AG04450 (cell line): ENCODE measurements at regions of chr17 and their contacts with region 1.

Region 1: GRCh38 chr17:20992987-20993862 is 49.6 kb downstream of the USP22 start:
- DNase-seq: peak; percentile 48
- H3K4me3 ChIP-seq: no peak overlapping the region
- H3K27ac ChIP-seq: no peak overlapping the region
- H3K27me3 ChIP-seq: peaks cover 4% of the 10 kb centered on the region
- CTCF ChIP-seq: peak; percentile 98

Region 2: DNA sequence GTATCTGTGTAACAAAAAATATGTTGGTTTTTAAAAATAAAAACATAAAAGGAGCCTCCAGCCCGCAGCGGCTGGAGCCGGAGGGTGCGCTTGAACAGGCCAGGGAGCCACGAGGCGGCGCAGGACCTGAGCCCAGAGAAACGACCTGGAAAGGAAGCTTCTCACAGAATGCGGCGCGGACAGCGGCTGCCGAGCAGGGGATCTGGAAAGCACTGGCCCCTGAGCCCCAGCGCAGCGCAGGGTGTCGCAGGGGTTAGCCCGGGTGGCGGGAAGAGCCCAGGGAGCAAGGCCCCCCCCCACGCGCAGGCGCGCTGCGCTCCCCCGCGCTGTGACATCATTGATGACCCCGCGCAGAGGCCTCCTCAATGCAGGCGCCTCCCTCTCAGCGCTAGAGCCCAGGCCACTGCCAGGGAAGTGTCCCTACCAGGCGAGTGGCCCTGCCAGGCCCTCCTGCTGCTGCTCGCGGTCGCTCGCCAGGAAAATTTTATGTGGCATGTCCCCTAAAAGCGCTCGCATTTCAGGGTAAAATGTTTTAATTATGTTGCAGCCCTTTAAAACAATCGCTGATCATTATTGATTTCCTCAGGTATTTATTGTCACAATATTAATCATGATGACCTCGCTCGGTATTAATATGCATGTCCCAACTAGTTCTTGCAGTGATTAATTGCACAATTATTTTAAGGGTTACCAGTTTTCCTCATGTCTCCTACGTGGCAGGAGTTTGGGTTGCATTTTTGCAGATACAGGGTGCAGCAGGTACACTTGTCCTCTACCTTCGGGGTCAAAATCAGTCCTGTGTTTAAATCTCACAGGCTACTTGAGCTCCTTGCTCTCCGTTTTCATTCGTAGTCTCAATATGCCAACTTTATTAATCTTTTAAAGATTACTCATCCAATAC is 84.6 kb before region 1 on chr17:
- CTCF ChIA-PET with region 1: interaction called, 24 read pairs
- POLR2A ChIA-PET with region 1: no interaction called
- DNase-seq: no peak
- H3K4me3 ChIP-seq: peak overlapping the region; percentile 68
- H3K27ac ChIP-seq: peak overlapping the region; percentile 52
- H3K27me3 ChIP-seq: no peaks in the 10 kb centered on the region
- CTCF ChIP-seq: peak; percentile 81

Region 3: DNA sequence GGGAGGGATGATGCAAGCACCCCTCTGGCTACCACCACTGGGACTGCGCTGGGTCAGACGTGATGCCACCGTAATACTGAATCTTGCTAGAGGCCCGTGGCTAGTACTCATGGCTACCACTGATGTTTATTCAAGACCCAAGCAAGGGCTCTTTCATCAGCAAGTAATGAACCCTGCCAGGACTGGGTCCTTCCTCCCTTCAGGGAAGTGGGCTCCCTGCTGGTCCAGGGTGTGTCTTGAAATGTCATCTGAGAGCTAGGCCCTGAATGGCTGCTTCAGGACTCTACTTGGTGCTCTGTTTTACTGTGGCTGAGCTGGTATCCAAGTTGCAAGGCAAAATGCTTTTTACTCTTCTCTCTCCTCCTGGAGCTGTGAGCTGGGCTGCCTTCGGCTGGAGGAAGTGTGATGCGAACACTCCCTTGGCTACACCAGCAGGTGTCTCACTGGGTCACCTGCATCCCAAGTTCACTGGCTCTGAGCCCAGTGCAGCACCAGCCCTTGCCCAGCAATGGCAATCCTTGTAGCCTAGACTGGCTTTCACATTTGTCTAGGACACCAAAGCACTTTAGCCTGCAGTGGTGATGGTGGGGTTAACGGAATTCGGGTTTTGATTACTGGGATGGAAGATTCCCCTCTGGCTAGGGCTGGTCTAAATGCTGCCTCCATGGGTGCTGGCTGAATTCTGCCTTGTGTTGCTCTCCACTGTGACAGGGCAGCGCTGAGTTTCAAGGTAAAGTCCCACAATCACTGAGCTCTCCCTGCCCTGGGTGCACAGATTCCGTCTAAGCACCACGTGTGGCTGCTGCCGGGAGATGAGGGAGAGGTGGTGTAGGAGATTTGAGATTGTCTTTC is 49.0 kb before region 1 on chr17:
- CTCF ChIA-PET with region 1: interaction called, 11 read pairs
- POLR2A ChIA-PET with region 1: no interaction called
- DNase-seq: no peak
- H3K4me3 ChIP-seq: no peak overlapping the region
- H3K27ac ChIP-seq: no peak overlapping the region
- H3K27me3 ChIP-seq: peaks cover 28% of the 10 kb centered on the region
- CTCF ChIP-seq: no peak

Region 4: DNA sequence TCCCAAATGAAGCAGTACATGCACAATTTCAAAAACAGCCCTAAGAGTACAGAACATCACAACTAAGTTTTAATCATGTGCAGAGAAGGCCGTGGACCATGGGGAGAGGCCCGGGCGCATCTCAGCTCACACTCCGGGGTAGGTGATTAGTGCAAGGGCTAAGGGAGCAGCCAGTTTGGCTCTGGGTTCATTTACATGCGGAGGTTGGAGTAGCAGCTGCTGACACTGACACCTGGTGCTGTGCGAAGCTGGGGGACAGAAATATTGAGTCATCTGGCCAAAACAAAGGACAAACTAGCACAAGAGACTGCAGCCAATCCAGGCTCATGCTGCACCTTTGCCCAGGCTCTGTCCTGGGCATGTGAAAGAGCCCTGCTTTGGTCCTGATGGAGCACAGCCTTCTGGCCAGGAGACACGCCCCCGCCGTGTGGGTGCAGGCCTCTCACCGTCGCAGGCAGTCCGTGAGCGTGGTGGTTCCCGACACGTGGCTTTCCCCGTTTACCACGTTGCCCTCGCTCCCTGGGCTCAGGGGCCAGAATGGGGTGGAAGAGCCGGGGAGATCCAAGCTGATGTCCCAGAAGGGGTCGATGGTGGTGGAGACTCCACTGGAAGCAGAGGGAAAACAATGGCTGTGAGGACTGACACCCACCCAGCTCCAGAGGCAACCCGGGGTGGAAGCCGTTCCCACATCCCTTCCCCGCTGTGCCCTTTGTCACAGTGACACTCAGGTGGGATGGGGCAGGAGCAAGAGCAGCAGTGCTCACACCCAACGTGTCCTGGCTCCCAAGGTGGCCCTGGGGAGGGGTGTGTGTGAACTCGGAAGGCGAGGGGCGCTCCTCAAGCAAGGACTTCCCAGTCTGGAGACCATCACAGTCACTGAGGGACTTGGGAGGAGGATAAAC is 17.7 kb after region 1 on chr17:
- CTCF ChIA-PET with region 1: interaction called, 10 read pairs
- POLR2A ChIA-PET with region 1: no interaction called
- DNase-seq: no peak
- H3K4me3 ChIP-seq: no peak overlapping the region
- H3K27ac ChIP-seq: no peak overlapping the region
- H3K27me3 ChIP-seq: no peaks in the 10 kb centered on the region
- CTCF ChIP-seq: no peak

Region 5: DNA sequence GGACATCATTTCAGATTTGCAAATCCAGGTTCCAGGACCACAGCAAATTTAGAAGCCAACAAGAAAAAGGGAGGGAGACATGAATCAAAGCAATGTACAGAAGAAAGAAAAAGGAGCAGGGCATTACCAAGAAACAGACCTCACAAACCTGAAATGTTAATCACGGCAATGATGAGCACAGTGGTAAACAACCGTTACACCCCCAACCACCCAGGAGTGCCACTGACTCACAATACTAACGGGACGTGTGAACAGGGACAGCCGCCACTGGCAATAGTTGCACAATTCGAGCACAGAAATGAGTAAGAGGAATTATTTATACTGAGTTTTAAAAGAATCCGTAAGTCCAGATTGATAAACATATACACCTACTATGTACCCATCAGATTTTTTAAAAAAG is 35.8 kb after region 1 on chr17:
- CTCF ChIA-PET with region 1: interaction called, 12 read pairs
- POLR2A ChIA-PET with region 1: no interaction called
- DNase-seq: no peak
- H3K4me3 ChIP-seq: no peak overlapping the region
- H3K27ac ChIP-seq: no peak overlapping the region
- H3K27me3 ChIP-seq: no peaks in the 10 kb centered on the region
- CTCF ChIP-seq: no peak